ENCODE measurements at regions of chr3 and their contacts with region 1.

Region 1: DNA sequence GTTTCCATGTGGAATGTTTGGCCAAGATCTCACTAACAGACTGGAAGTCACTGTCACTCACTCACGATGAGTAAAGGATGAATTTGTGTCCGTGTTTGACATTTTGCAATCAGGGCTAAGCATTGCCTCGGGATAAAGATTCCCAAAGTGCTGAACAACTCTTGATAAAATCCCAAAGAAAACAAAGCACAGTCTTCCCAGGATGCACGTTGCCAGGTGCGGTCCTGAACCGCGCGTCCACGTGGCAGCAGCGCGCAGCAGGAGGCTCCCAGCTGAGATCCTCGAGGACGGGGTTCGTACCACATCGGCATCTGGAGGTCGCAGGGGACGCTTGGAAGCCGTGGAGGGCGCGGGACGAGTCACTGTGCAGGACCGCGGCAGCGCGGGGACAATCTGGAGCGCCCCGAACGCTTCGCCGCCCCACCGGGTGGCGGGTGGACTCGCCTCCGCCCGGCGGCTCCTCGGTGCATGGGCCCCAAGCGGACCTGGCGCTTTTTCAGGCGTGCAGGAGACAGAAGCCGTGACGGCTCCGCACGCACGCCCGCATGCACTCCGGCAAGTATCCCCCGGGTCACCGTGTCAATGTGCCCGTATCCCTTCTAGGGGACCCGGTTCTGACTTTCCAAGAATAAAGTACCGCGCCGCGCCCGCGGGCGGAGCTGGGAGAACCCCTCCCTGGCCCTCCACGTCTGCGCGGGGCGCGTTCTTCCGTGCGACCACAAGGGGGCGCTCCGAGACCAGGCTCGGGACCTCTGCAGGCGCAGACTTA is 17.7 kb downstream of the CPN2 start:
- DNase-seq: peak; percentile 94
- ATAC-seq: peak; percentile 92

Region 2: DNA sequence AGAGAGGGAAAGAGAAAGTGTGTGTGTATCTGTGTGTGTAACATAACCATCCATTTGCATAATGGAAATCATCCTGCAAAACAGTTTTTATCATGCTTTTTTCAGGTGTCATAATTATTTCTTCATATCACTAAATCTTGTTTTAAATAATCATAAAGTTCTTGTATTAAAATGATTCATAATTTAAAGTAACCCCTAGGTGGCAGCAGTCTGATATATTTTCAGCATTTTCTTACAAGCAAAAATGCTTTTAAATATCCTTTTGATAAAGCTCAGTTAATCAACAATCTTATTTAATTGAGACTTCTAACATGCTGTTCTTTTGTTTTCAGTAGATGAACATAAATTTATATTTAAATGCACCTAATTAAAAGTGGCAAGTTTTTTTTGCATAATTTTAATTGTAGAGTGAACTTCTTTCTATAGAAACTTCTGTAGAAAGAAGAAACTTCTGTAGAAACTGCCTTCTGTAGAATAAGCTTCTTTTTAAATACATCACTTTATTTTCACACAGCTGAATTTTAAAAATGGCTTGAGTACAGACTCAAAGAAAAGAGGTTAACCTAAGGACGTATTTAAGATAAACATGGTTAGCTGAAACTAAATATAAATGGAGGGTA is 667.9 kb before region 1 on chr3:
- intact Hi-C with region 1: loop called (anchors 10 kb)
- DNase-seq: no peak
- ATAC-seq: no peak

Region 3: GRCh38 chr3:194381460-194381875 is 48.1 kb after region 1 on chr3:
- intact Hi-C with region 1: no loop called
- DNase-seq: no peak
- ATAC-seq: no peak

Region 4: DNA sequence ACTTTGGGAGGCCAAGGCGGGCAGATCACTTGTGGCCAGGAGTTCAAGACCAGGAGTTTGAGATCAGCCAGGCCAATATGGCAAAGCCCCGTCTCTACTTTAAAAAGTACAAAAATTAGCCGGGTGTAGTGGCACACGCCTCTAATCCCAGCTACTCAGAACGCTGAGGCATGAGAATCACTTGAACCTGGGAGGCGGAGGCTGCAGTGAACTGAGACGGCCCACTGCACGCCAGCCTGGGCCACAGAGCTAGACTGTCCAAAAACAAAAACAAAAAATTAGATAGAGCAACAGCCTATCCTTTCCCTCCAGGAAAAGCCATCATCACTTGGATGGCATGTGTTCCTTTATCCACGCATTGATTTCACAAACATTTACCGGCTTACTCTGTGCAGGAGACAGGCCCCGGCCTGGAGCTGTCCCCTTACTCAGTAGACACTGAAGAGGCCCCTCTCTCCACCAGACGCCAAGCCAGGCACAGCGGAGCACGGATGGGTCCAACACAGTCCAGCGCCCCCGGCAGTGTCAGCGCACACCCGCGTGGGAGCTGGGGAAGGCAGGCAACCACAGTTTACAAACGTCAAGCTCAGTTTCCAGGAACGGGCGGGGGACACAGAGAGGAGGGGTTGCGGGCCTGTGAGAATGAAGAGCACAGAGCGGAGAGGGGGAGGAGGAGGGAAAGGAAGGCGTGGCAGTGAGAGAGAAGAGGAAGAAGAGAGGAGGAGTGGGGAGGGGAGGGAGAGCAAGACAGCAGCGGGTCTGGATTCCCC is 62.6 kb after region 1 on chr3:
- intact Hi-C with region 1: no loop called
- DNase-seq: no peak
- ATAC-seq: peak; percentile 60